HCT116 (cell line): ENCODE measurements at regions of chr2 and their contacts with region 1.

Region 1: GRCh38 chr2:206556357-206556949 is 85.8 kb upstream of the FAM237A start:
- DNase-seq: peak; percentile 48
- ATAC-seq: peak; percentile 84
- H3K4me3 ChIP-seq: no peak overlapping the region
- H3K27ac ChIP-seq: no peak overlapping the region
- H3K4me1 ChIP-seq: no peaks in the 10 kb centered on the region
- H3K27me3 ChIP-seq: peaks cover 6% of the 10 kb centered on the region; the same call in 1 of the 2 replicates
- CTCF ChIP-seq: peak; percentile 38 to 61 (median 41); a peak in 5 of 6 replicates
- POLR2A ChIP-seq: no peak
- RAD21 ChIP-seq: peak; percentile 60

Region 2: DNA sequence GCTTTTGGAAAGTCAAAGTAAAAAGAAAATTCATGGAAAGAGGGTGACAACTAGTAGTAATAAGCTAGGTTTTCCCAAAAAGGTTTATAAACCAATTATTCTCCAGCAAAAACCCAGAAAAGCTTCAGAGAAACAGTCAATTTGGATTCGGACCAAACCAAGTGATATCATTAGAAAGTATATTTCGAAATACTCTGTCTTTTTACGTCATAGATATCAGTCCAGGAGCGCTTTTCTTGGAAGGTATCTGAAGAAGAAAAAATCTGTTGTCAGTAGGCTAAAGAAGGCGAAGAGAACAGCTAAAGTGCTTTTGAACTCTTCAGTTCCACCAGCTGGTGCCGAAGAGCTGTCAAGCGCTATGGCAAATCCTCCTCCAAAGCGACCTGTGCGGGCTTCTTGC is 245.4 kb before region 1 on chr2:
- CTCF ChIA-PET with region 1: no interaction called
- POLR2A ChIA-PET with region 1: no interaction called
- RAD21 ChIA-PET with region 1: no interaction called
- intact Hi-C with region 1: no loop called
- DNase-seq: no peak
- ATAC-seq: no peak
- H3K4me3 ChIP-seq: no peak overlapping the region
- H3K27ac ChIP-seq: no peak overlapping the region
- H3K4me1 ChIP-seq: no peaks in the 10 kb centered on the region
- H3K27me3 ChIP-seq: no peaks in the 10 kb centered on the region
- CTCF ChIP-seq: no peak
- POLR2A ChIP-seq: no peak
- RAD21 ChIP-seq: no peak

Region 3: GRCh38 chr2:206392118-206392517 is 164.3 kb before region 1 on chr2:
- CTCF ChIA-PET with region 1: interaction called, 15 read pairs
- POLR2A ChIA-PET with region 1: no interaction called
- RAD21 ChIA-PET with region 1: no interaction called
- intact Hi-C with region 1: loop called (anchors 2 kb)
- DNase-seq: peak; percentile 46
- ATAC-seq: peak; percentile 99
- H3K4me3 ChIP-seq: no peak overlapping the region
- H3K27ac ChIP-seq: no peak overlapping the region
- H3K4me1 ChIP-seq: no peaks in the 10 kb centered on the region
- H3K27me3 ChIP-seq: no peaks in the 10 kb centered on the region
- CTCF ChIP-seq: peak; percentile 57 to 72 (median 65); a peak in 5 of 6 replicates
- POLR2A ChIP-seq: no peak
- RAD21 ChIP-seq: peak; percentile 82

Region 4: GRCh38 chr2:206543073-206543472 is 13.4 kb before region 1 on chr2:
- CTCF ChIA-PET with region 1: interaction called, 10 read pairs
- POLR2A ChIA-PET with region 1: no interaction called
- RAD21 ChIA-PET with region 1: interaction called in 1 of 2 experiments, 3 read pairs
- intact Hi-C with region 1: no loop called
- DNase-seq: no peak
- ATAC-seq: no peak
- H3K4me3 ChIP-seq: no peak overlapping the region
- H3K27ac ChIP-seq: no peak overlapping the region
- H3K4me1 ChIP-seq: no peaks in the 10 kb centered on the region
- H3K27me3 ChIP-seq: no peaks in the 10 kb centered on the region
- CTCF ChIP-seq: no peak
- POLR2A ChIP-seq: no peak
- RAD21 ChIP-seq: no peak

Region 5: DNA sequence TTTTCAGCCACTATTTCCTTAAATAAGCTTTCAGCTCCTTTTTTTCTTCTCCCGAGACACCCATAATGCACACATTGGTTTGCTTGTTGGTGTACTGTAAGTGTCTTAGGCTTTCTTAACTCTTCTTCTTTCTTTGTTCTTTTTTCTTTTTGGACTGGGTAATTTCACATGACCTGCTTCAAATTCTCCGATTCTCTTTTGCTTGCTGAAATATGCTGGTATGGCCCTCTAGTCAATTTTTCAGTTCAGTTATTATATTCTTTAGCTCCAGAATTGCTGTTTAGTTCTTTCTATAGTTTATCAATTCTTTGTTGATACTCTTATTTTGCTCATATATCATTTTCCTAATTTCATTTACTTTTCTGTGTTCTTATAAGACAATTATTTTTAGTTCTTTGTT is 224.2 kb after region 1 on chr2:
- CTCF ChIA-PET with region 1: interaction called, 6 read pairs
- POLR2A ChIA-PET with region 1: no interaction called
- RAD21 ChIA-PET with region 1: no interaction called
- intact Hi-C with region 1: loop called (anchors 2 kb)
- DNase-seq: no peak
- ATAC-seq: no peak
- H3K4me3 ChIP-seq: no peak overlapping the region
- H3K27ac ChIP-seq: no peak overlapping the region
- H3K4me1 ChIP-seq: no peaks in the 10 kb centered on the region
- H3K27me3 ChIP-seq: no peaks in the 10 kb centered on the region
- CTCF ChIP-seq: no peak
- POLR2A ChIP-seq: no peak
- RAD21 ChIP-seq: no peak

Region 6: DNA sequence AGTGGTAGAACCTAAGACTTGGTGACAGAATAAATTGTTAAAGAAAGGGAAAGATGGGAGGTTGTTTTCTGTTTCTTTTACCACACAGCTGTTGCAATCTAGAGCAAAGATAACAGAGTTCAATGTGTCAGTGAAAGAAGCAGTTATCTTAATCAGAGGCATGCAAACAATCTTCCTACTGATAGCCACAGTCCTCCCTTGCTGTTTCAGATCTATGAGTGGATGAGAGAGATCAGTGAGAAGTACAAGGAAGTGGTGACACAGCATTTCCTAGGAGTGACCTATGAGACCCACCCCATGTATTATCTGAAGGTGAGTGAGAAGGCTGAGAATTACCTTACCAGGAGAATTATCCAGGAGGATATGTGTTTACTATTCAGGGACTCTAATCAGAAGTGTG is 398.8 kb after region 1 on chr2:
- CTCF ChIA-PET with region 1: no interaction called
- POLR2A ChIA-PET with region 1: no interaction called
- RAD21 ChIA-PET with region 1: no interaction called
- intact Hi-C with region 1: no loop called
- DNase-seq: no peak
- ATAC-seq: no peak
- H3K4me3 ChIP-seq: no peak overlapping the region
- H3K27ac ChIP-seq: no peak overlapping the region
- H3K4me1 ChIP-seq: no peaks in the 10 kb centered on the region
- H3K27me3 ChIP-seq: no peaks in the 10 kb centered on the region
- CTCF ChIP-seq: no peak
- POLR2A ChIP-seq: no peak
- RAD21 ChIP-seq: no peak

Region 7: DNA sequence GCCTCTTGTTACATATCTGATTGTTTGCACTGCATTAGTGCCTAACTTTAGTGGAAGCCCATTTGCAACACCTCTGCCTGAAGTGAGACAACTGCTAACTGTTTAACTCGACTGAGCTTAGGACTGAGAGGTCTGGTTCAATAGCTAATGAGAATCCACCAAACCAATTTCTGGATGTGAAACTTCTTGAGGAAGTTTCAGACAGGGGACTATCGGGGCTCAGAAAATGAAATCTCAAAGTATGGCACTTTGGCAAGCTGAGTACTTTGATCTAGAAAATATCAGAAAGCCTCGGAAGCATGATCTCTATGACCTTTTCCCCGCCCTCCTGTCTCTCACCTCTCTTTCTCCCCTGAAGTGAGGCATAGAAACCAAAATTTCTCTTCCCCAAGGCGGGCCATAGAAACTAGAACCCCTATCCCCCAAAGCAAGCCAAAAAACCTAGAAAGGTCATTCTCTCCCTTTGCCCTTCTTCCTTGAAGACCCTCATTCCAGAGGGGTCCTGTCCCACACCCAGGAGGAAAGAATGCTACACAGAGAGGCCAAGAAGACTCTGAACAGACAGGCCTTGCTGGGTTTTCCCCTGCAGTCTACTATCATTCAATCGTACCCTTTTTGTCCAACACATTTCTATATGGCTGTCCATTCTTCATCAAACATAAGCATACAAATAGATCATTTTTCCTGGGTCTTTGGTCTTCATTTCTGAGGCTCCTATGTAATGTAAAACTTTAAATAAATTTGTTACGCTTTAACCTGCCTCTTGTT is 903.7 kb after region 1 on chr2:
- CTCF ChIA-PET with region 1: no interaction called
- POLR2A ChIA-PET with region 1: no interaction called
- RAD21 ChIA-PET with region 1: no interaction called
- intact Hi-C with region 1: no loop called
- DNase-seq: no peak
- ATAC-seq: no peak
- H3K4me3 ChIP-seq: no peak overlapping the region
- H3K27ac ChIP-seq: no peak overlapping the region
- H3K4me1 ChIP-seq: no peaks in the 10 kb centered on the region
- H3K27me3 ChIP-seq: no peaks in the 10 kb centered on the region
- CTCF ChIP-seq: no peak
- POLR2A ChIP-seq: no peak
- RAD21 ChIP-seq: no peak